K562 (cell line): ENCODE measurements at regions of chr14 and their contacts with region 1.

Region 1: DNA sequence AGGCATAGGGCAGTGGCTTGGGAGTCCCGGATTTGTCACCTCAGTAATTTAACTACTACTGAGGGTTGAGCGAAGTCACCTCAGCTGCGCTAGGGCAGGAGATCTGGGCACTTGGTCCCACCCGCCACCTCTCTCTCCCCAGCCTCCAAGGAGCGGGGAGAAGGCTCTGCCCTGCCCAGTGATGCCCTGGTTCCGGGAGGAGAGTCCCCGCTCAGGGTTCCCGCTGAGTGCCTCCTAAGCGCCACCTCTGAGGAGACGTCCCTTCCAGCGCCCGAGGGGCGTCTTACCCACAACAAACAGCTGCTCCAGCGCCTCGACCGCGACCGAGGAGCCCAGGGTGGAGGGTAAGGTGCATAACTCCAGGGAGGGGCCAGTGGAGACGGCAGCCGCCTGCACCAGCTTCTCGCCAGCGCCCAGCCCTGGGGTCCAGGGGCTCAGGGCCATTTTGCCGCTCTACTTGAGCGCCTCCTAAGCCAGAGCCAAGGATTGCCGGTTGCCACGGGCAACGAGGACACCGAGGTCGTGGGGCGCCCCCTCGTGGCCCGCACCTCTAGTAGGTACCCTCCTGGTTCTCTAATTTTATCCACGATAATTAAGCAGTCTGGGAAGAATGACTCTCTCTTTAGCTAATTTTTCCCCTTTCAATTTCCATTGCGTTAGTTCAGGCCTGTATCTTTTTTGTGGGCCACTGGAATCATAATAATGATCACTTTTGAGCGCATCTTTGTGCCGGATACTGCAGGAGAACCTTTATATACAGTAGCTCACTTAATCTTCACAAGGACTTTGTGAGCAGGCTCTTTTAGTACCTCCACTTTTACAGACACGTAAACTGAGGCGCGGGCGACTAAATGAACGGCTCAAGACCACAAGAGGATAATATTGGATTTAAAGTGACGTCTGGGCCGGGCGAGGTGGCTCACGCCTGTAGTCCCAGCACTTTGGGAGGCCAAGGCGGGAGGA is at the start of gene CCDC175:
- DNase-seq: peak; percentile 75 to 86 (median 82)
- ATAC-seq: peak; percentile 100
- H3K4me3 ChIP-seq: peak within 1 kb of the TSS; percentile 41
- H3K27ac ChIP-seq: no peak within 1 kb of the TSS
- H3K4me1 ChIP-seq: peaks cover 0 to 6% of the 10 kb centered on the region in 2 experiments; a peak in 2 of 5 replicates
- H3K27me3 ChIP-seq: peaks cover 0 to 5% of the 10 kb centered on the region in 2 experiments; a peak in 2 of 5 replicates
- CTCF ChIP-seq: peak; percentile 81 to 96 (median 93)
- EP300 ChIP-seq: no peak
- POLR2A ChIP-seq: no peak
- RAD21 ChIP-seq: peak; percentile 72 to 77
- polyA plus RNA-seq, gene CCDC175: not detected

Region 2: GRCh38 chr14:59028476-59029202 is 548.0 kb before region 1 on chr14:
- CTCF ChIA-PET with region 1: no interaction called
- POLR2A ChIA-PET with region 1: no interaction called
- in situ Hi-C with region 1: no loop called
- intact Hi-C with region 1: loop called (anchors 10 kb)
- DNase-seq: peak; percentile 24 to 47 (median 26)
- ATAC-seq: peak; percentile 88
- H3K4me3 ChIP-seq: no peak overlapping the region
- H3K27ac ChIP-seq: no peak overlapping the region
- H3K4me1 ChIP-seq: no peaks in the 10 kb centered on the region
- H3K27me3 ChIP-seq: no peaks in the 10 kb centered on the region
- CTCF ChIP-seq: peak; percentile 67 to 74 (median 71)
- EP300 ChIP-seq: no peak
- POLR2A ChIP-seq: no peak
- RAD21 ChIP-seq: peak; percentile 74 to 79

Region 3: DNA sequence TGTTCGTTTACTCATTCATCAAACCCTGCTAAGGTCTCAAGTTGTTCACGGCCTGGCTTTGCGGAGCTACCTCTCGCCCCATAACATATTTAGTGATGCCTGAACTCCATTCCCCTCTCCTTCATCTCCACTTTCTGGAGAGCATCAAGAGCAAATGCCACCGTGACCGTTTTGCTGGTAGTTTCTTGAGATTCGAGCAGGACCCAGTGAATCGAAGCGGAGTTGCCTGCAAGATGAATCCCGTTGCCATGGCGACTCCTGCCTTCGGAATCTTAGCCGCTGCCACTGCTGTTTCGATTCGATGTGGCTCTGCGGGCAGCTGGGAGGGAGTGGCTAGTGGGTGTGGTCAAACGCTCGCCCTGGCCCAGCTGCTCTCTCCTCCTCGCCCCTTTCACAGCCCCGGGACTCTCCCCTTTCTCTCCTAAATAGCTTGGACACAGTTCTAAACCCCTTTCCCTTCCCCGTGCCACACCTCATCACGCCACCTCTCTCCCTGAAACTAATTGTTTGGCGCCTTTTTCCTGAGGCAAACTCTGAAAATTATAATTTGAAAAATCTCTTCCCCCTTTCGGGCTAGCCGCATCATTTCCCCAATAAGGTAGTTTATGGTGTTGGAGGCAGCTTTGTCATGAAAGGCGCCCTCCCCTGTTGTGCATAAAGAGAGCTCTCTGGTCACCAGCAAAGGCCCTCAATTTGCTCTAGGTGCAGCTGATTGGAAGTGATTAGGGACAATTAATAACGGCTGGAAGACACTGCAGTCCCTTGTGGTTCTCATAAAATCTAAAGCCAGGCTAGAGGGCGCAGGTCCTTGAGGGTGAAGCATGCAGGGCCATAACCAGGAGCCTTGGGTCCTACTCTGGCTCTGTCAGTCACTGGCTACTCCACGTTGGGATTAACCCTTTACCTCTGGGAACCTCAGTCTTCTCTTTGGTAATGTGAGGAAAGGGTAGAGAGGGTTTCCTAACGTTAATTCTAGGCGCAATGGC is 386.5 kb before region 1 on chr14:
- CTCF ChIA-PET with region 1: no interaction called
- POLR2A ChIA-PET with region 1: no interaction called
- in situ Hi-C with region 1: no loop called
- intact Hi-C with region 1: no loop called
- DNase-seq: peak; percentile 68 to 73 (median 70)
- ATAC-seq: peak; percentile 42
- H3K4me3 ChIP-seq: peak overlapping the region; percentile 91
- H3K27ac ChIP-seq: no peak overlapping the region; the same call in 2 of the 3 replicates
- H3K4me1 ChIP-seq: peaks cover 14 to 16% of the 10 kb centered on the region in 2 experiments; a peak in 4 of 5 replicates
- H3K27me3 ChIP-seq: no peaks in the 10 kb centered on the region
- CTCF ChIP-seq: no peak
- EP300 ChIP-seq: no peak
- POLR2A ChIP-seq: no peak
- RAD21 ChIP-seq: no peak

Region 4: DNA sequence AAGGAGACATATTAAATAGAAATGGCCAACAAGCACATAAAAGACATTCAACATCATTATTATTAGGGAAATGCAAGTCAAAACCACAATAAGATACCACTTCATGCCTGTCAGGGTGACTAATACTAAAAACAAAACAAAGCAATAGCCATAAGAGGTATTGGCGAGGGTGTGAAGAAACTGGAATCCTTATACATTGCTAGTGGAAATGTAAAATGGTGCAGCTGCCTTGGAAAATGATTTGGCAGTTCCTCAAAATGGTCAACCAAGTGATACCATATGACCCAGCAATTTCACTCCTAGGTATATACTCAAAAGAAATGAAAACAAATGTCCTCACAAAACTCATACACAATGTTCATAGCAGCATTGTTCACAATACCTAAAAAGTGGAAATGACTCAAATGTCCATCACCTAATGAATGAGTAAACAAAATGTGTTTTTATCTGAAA is 138.4 kb before region 1 on chr14:
- CTCF ChIA-PET with region 1: no interaction called
- POLR2A ChIA-PET with region 1: no interaction called
- in situ Hi-C with region 1: no loop called
- intact Hi-C with region 1: loop called (anchors 5 kb)
- DNase-seq: no peak
- ATAC-seq: no peak
- H3K4me3 ChIP-seq: no peak overlapping the region
- H3K27ac ChIP-seq: no peak overlapping the region
- H3K4me1 ChIP-seq: no peaks in the 10 kb centered on the region
- H3K27me3 ChIP-seq: no peaks in the 10 kb centered on the region
- CTCF ChIP-seq: no peak
- EP300 ChIP-seq: no peak
- POLR2A ChIP-seq: no peak
- RAD21 ChIP-seq: no peak

Region 5: DNA sequence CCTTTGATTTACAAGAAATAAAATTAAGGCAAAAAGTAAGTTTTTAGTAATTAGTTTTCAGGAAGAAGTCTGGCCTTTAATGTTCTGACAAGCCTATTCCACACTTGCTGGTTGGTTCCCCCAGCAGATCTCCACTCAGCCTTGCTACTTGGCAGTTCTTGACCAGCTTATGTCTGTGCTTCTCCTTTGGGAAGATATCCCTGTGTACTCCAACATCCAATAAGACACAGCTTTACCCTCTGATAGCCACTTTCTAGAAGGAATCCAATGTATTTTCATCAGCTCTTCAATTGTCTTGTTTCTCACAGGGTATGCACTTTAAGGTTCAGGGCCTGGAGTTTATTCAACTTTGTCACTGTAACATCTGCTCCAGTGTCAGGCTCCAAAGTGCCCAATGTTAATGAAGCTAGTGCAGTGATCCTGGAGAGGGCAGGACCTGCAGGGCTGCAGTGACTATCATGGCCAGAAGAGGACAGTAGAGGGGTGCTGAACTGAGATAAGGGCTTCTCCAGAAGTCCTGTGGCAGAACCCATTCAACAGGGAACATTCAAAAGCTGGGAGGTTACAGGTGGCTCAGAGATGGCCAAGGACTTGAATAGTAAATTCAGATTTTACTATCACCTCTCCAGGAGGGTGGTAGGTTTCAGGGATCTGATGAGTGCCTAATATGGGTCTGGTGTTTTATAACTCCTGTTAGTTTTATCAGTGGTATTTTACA is 69.4 kb before region 1 on chr14:
- CTCF ChIA-PET with region 1: interaction called, 3 read pairs
- POLR2A ChIA-PET with region 1: interaction called, 3 read pairs
- in situ Hi-C with region 1: no loop called
- intact Hi-C with region 1: loop called (anchors 1 kb)
- DNase-seq: peak; percentile 50 to 68 (median 58)
- ATAC-seq: peak; percentile 98
- H3K4me3 ChIP-seq: no peak overlapping the region
- H3K27ac ChIP-seq: no peak overlapping the region
- H3K4me1 ChIP-seq: no peaks in the 10 kb centered on the region
- H3K27me3 ChIP-seq: no peaks in the 10 kb centered on the region
- CTCF ChIP-seq: peak; percentile 84 to 91 (median 90)
- EP300 ChIP-seq: no peak
- POLR2A ChIP-seq: no peak
- RAD21 ChIP-seq: peak; percentile 47 to 73